Activated T-helper 2 cell treated with anti-CD3 and anti-CD28 coated beads, Interferon-gamma antibody, Interleukin-2, Interleukin-4, amounts not matched to agents 10 μg/mL and 5 μg/mL and 100 μg/mL, durations not matched to agents 14 hours and 24 hours and 36 hours (primary cell): ENCODE measurements at regions of chr17 and their contacts with region 1.

Region 1: DNA sequence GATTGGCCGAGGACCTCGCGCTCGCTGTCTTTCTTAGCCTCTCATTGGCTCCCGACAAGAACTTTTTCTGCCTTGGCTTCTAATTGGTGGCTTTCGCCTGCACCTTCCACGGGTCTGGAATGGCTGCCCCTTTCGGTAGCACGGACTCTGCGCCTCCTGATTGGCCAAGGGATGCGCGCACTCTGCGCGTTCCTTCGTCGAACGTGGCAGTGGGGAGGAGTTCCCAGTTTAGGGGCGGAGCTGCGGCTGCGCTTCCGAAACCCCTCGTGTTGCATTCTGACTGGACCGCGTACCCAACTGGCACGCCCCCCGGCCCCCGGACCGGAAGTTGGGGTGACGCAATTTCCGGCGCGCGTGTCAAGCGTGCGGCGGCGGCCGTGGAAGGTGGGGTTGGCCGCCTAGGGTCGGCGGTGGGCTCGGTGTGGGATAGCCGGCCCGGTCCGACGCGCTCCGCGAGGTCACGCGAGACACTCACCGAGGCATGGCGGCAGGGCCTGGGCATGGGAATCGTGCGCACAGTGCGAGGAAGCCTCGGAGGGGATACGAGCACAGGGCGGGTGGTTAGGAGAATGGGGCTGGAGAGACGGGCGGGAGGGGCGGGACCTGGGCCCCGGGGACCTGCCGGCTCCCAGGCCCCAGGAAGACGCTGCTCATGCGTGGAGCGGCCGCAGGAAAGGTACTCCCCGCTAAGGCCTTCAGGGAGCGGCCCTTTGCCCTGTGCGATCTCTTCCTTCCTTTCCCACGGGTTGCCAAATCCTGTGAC is 602 bp upstream of the P4HB start:
- DNase-seq: peak; percentile 100
- H3K4me3 Mint-ChIP-seq: peak overlapping the region; percentile 88
- H3K27ac Mint-ChIP-seq: peak overlapping the region; percentile 88
- H3K4me1 Mint-ChIP-seq: peaks cover 30% of the 10 kb centered on the region
- H3K27me3 Mint-ChIP-seq: no peaks in the 10 kb centered on the region

Region 2: DNA sequence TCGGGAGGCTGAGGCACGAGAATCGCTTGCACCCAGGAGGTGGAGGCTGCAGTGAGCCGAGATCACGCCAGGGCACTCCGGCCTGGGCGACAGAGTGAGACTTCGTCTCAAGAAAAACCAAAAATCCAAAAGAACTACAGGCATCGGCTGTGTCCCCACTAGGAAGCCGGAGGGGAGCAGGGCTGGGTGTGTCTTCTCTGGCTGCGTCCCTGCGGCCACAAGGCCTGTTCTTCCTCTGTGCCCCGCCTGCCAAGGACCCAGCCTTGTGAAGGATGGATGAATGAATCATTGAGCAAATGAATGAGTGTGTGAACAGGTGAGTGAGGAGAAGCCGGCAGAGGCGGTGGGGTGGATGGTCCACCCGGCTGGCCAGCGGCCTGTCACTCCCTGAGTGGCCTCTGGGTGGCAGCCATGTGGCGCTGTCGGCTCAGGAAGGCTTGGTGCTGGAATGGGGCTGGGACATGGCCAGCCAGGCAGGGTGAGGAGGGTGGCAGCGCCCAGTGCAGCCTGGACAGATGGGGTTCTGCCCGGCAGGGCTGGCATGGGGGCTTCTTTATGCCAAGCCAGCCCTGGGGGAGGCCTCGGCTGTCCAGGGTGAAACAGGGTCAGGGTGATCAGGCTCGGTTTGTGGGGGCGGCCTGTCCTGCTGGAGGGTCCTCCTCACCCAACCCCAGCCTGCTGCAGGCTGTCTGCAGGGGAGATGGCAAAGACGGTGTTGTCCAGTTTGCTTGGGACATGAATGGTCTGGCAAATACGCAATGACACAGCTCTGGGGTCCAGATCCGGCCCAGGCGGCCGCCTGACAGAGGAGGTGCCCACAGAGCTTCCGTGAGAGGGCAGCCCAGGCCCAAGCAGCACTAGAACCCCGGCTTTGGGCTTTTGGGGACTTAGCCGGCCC is 127.2 kb before region 1 on chr17:
- intact Hi-C with region 1: loop called (anchors 1 kb)
- DNase-seq: peak; percentile 52
- H3K4me3 Mint-ChIP-seq: no peak overlapping the region
- H3K27ac Mint-ChIP-seq: no peak overlapping the region
- H3K4me1 Mint-ChIP-seq: peaks cover 6% of the 10 kb centered on the region
- H3K27me3 Mint-ChIP-seq: peaks cover 13% of the 10 kb centered on the region

Region 3: DNA sequence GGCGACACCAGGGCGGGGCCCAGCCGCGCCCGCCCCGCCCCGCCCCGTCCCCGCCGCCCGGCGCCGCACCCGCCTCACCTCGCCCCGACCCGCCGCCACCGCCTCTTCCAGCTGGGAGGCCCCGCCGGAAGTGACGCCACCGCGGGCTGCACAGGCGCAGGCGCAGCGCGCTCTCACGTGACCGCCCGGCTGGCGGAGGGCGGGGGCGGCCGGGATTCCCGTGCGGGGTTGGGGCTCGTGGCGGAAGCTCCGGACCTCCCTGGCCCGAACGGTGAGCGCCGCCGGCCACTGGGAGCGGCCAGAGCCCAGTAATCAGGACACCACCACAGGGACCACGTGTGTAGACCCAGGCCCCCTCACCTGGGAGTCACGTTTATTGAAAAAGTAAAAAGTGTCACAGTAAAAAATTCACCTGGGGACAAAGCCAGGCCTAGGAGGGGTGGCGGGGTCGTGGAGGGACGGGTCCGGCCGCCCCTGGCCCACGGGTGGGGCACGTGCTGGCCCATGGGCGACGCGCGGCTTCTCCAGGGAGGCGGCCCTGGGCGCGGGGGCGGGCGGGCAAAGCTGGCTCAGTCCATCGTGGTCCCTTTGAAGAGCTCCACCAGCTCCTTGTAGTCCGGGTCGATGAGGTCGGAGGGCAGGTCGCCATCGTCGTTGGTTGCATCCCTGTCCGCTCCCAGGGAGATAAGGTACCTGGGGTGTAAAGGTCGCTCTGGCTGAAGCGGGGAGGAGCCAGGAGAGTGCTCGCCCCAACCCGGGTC is 27.6 kb before region 1 on chr17 and contains the start of gene MCRIP1:
- intact Hi-C with region 1: loop called (anchors 1 kb)
- DNase-seq: peak; percentile 94
- H3K4me3 Mint-ChIP-seq: peak within 1 kb of the TSS; percentile 90
- H3K27ac Mint-ChIP-seq: peak within 1 kb of the TSS; percentile 90
- H3K4me1 Mint-ChIP-seq: peaks cover 17% of the 10 kb centered on the region
- H3K27me3 Mint-ChIP-seq: no peaks in the 10 kb centered on the region
- total RNA-seq, gene MCRIP1: 42.5 and 42.9 TPM in 2 replicates

Region 4: GRCh38 chr17:81871387-81872230 is 10.7 kb after region 1 on chr17:
- intact Hi-C with region 1: loop called (anchors 1 kb)
- DNase-seq: peak; percentile 94
- H3K4me3 Mint-ChIP-seq: peak overlapping the region; percentile 82
- H3K27ac Mint-ChIP-seq: peak overlapping the region; percentile 91
- H3K4me1 Mint-ChIP-seq: peaks cover 16% of the 10 kb centered on the region
- H3K27me3 Mint-ChIP-seq: no peaks in the 10 kb centered on the region

Region 5: GRCh38 chr17:81885869-81886549 is 25.1 kb after region 1 on chr17:
- intact Hi-C with region 1: no loop called
- DNase-seq: no peak
- H3K4me3 Mint-ChIP-seq: no peak overlapping the region
- H3K27ac Mint-ChIP-seq: no peak overlapping the region
- H3K4me1 Mint-ChIP-seq: peaks cover 16% of the 10 kb centered on the region
- H3K27me3 Mint-ChIP-seq: no peaks in the 10 kb centered on the region

Region 6: DNA sequence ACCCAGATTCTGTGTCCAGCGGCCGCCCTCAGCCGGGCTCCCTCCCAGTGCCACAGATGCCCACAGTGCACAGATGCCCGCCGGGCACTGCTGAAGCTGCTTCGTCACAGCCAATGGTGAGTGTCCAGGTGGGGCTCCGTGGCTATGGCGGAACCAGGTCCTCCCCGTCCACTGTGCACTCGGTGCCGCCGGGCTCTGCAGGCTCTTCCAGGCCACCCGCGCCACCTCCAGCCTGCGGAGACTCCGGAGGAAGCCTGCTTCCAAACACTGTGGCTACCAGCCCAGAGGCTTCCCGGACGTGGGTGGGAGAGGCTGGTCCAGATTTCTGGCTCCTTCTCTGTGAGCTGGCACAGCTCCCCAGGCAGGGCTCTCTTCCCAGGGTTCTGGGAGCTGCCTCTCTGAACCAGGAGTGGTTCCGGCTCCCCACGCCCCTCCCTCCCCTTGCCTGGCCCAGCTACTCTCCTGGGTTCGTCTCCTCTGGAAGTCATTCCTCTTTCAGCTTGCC is 79.0 kb after region 1 on chr17:
- intact Hi-C with region 1: no loop called
- DNase-seq: no peak
- H3K4me3 Mint-ChIP-seq: no peak overlapping the region
- H3K27ac Mint-ChIP-seq: no peak overlapping the region
- H3K4me1 Mint-ChIP-seq: peaks cover 8% of the 10 kb centered on the region
- H3K27me3 Mint-ChIP-seq: no peaks in the 10 kb centered on the region